ENCODE measurements at regions of chr10 and their contacts with region 1.

Region 1: DNA sequence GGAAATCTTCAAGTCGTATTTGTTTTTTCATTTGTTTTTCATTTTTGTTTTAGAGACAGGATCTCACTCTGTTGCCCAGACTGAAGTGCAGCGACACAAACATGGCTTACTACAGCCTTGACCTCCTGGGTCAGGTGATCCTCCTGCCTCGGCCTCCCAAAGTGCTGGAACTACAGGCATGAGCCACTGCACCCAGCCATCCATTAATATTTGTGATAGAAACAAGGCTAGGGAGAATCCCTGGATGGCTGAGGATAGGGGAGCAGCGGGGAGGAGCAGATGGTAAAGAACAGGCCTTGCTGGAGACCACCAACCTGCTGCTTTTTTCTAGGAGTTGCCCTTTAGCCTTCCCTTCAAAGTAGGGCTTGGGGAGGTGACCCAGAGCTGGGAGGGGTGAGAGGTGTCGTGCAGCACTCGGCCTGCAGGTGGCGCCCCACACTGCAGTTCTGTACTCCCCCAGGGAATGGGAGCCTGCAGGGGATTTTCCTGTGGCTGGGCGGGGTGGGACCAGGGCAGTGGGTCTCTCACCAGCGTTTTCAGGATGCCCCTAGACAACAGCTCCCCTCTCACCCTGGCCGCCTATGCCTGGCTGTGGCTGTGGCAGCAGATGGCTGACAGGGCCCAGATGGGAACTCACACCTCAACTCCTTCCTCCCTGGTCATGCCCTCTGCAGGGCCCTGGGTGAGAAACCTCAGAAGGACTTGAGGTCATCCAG is 12.6 kb upstream of the CDH23 start:
- DNase-seq: peak; percentile 48 to 89
- H3K4me3 ChIP-seq: no peak overlapping the region
- H3K4me1 ChIP-seq: no peaks in the 10 kb centered on the region
- H3K27me3 ChIP-seq: peaks cover 8% of the 10 kb centered on the region; the same call in 1 of the 2 replicates

Region 2: DNA sequence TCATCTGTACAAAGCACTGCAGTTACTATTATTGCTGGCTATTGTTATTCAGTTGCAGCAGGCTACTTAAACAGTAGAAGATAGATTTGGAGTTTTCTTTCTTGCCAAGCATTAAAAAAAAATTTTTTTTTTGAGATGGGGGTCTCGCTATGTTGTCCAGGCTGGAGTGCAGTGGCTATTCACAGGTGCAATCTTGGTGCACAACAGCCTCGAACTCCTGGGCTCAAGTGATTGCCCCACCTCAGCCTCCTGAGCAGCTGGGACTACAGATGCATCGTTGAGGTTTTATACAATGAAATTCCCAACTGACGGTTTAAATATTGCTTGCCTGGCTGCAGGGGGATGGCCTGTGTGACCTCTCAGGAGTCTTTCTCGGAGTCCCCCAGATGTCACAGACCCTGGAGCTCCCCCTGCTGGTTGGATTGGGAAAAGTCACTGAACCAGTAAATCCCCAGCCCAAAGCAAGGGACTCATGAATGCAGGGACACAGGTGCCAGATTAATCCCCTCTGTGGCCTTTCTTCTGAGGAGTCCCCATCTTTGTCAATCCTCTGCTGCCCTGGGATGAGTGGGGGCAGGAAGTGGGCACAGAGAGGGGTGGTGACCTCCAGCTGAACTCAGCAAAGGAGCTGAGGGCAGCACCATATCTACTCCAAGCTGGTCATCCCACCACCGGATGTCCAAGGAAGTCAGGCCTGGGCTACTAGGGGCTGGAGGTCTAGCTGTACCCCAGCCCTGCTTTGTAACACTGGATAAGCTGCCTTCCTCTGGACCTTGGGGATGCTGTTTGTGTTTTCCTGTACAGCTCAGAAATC is 185.9 kb after region 1 on chr10:
- in situ Hi-C with region 1: loop called (anchors 5 kb)
- DNase-seq: peak; percentile 8 to 90
- H3K4me3 ChIP-seq: no peak overlapping the region
- H3K4me1 ChIP-seq: no peaks in the 10 kb centered on the region
- H3K27me3 ChIP-seq: no peaks in the 10 kb centered on the region

Region 3: DNA sequence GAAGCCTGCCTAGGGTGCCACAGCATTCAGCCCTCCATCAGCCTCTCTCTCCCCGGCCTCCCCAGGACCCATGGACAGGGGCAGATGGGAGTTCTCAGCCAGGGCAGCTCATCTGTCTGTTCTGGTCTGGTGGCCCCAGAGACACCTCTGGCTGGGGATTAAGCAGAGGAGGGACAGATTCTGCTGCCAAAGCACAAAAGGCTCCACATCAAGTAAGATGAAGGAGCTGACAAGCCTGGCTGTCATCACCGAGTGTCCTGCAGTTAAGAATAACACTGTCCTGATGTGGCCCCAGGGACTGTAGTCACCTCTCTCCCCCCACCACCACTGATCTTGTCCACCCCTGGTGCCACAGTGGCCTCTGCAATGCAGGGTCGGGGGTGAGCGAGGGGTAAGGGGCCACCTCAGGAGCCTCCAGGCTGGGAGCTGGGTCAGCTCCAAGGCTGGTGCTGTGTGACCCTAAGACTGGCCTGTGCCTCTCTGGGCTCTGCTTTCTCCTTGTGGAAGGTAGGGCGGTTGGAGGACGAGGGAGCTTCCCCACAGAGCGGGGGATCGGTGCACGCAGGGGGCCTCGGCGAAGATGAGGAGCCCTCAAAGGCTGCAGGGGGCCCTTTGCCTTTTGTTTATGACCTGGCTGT is 316.7 kb after region 1 on chr10:
- in situ Hi-C with region 1: loop called (anchors 5 kb)
- DNase-seq: no peak
- H3K4me3 ChIP-seq: no peak overlapping the region
- H3K4me1 ChIP-seq: no peaks in the 10 kb centered on the region
- H3K27me3 ChIP-seq: no peaks in the 10 kb centered on the region